ENCODE measurements at regions of chr6 and their contacts with region 1.

Region 1: DNA sequence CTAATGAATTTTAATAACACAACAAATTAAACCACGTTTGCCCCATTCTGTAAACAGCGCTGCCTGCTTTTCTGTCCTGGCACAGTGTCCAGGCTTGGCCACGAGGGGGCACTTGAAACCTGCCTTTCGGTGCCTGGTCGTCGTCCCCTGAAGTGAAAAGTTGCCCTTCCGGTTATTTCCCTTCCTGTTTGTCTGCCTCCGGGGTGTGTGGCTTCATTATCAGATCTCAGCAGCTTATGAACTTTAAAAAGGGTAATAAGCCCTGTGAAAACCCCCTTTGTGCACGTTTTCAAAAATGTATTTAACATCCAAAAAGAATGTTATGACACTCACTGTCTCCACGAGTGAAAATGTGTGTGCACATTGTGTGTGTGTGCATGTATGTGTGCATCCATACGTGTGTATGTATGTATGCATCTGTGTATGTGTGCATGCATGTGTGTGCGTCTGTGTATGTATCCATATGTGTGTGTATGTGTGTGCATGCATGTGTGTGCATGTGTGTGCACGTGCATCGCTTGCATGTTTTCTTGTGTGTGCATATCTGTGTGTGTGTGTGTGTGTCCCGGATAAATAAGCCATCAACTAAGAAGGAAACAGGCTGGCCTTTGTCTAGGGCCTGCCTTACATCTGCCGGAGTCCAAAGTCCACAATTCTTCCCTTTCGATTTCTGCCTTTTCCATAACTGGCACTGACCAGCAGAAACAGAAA is 358.4 kb downstream of the THBS2 start:
- DNase-seq: peak; percentile 61 to 73
- H3K4me3 ChIP-seq: no peak overlapping the region
- H3K27ac ChIP-seq: no peak overlapping the region
- H3K4me1 ChIP-seq: no peaks in the 10 kb centered on the region
- H3K27me3 ChIP-seq: peaks cover 75% of the 10 kb centered on the region
- CTCF ChIP-seq: peak; percentile 90

Region 2: GRCh38 chr6:168956884-168957730 is 61.9 kb after region 1 on chr6:
- CTCF ChIA-PET with region 1: no interaction called
- POLR2A ChIA-PET with region 1: no interaction called
- intact Hi-C with region 1: loop called (anchors 2 kb)
- DNase-seq: peak; percentile 12 to 46
- H3K4me3 ChIP-seq: no peak overlapping the region
- H3K27ac ChIP-seq: no peak overlapping the region
- H3K4me1 ChIP-seq: no peaks in the 10 kb centered on the region
- H3K27me3 ChIP-seq: peaks cover 61% of the 10 kb centered on the region
- CTCF ChIP-seq: peak; percentile 73

Region 3: DNA sequence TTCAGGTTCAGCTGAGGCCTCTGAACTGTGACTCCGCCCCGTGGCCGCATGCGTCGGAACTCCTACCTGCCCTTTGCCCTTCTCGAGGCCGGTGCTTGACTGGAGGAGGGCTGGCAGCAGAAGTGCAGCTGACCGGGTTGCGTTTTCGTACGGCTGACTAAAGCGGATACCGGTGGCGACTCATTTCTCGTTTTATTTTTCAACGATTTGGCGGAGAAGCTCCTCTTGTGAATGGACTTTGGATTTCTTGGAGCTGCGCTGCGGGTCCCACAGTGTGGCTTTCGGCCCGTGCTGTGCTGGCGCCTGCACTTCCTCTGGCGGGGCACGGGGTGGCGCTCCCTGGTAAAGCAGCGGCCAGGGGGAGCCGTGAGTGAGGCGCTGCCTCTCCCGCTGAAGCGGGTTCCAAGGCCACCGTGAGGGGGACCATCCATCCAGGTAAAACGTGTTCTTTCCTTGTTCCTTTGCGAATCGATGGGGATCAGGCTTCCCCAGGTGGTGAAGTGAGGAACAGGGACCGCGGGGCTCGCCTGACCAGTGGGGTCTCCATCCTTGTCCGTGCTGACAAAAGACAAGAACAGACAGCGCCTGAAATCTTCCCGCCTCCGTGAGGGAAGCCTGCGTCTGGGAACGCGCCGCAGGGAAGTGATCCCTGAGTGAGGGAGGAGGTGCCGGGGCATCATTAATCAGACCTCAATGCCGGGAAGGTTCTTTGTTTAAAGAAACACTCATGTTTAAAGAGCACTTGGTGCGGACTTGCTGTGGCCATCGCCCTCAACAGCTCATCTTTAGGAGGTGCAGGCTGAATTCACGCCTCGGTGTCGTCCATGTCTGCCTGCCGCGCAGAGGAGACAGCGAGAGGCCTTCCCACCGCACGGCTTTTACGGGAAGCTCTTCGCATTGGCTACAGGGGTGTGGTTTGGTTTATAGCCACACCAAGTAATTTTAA is 895.0 kb after region 1 on chr6:
- CTCF ChIA-PET with region 1: no interaction called
- POLR2A ChIA-PET with region 1: no interaction called
- intact Hi-C with region 1: loop called (anchors 10 kb)
- DNase-seq: peak in 1 of 2 experiments; percentile 47
- H3K4me3 ChIP-seq: no peak overlapping the region
- H3K27ac ChIP-seq: no peak overlapping the region
- H3K4me1 ChIP-seq: no peaks in the 10 kb centered on the region
- H3K27me3 ChIP-seq: peaks cover 66% of the 10 kb centered on the region
- CTCF ChIP-seq: peak; percentile 84